ENCODE measurements at regions of chr6 and their contacts with region 1.

Region 1: GRCh38 chr6:2952557-2953095 is 18.7 kb downstream of the SERPINB6 start:
- DNase-seq: peak; percentile 88
- H3K4me3 ChIP-seq: peak overlapping the region in 1 of 2 experiments; percentile 25; a peak in 1 of 4 replicates
- H3K27ac ChIP-seq: peak overlapping the region; percentile 48 to 54
- H3K4me1 ChIP-seq: peaks cover 5 to 9% of the 10 kb centered on the region in 2 experiments; a peak in 2 of 4 replicates
- H3K27me3 ChIP-seq: no peaks in the 10 kb centered on the region
- CTCF ChIP-seq: peak; percentile 100
- EP300 ChIP-seq: no peak
- RAD21 ChIP-seq: peak; percentile 60

Region 2: DNA sequence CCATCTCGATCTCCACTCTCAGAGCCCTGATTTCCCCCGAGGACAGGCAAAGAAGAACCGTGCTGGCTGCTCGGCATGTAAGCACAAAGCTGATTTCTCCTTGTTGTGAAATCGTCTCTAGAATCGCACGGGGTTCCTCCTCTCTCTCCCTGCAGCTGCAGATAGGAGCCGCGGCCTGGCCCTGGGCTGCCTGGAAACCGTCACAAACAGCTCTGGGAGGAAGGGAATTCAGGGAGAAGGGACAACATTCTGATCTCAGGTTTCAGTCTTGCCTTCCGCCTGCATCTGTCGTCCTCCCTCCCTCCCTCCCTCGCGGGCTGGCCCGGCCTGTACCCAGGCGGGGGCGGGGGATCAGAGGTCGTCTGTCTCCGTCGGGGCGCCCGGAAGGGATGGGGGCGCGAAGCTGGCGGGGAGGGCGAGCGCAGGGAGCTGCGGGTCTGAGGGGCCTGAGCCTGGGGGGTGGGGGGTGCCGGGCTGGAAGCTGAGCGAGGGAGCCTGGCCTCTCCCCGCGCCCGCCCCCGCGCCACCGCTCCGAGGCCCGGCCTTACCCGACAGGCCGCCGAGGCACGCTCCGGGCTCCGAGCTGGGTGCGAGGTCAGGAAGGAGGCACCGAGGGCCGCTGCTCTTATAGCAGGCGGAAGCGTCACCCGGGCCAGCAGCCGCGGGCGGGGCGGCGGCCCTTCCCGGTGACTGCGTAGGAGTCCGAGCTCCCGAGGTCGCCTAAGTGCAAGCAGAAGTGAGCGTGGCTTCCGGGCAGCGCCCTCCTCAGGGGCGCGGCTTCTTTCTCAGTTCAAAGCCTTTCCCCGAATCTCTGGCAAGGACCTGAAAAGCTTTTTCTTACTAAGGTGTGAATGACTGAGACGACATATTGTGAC is 111.1 kb before region 1 on chr6 and contains the start of gene SERPINB1:
- CTCF ChIA-PET with region 1: interaction called, 26 read pairs
- POLR2A ChIA-PET with region 1: no interaction called
- DNase-seq: peak; percentile 82
- H3K4me3 ChIP-seq: peak within 1 kb of the TSS; percentile 45 to 47
- H3K27ac ChIP-seq: peak within 1 kb of the TSS; percentile 67 to 87
- H3K4me1 ChIP-seq: peaks cover 25 to 26% of the 10 kb centered on the region in 2 experiments; a peak in 3 of 4 replicates
- H3K27me3 ChIP-seq: no peaks in the 10 kb centered on the region
- CTCF ChIP-seq: no peak
- EP300 ChIP-seq: no peak
- RAD21 ChIP-seq: no peak
- polyA plus RNA-seq, gene SERPINB1: 9.4 and 10.9 TPM in 2 replicates

Region 3: GRCh38 chr6:2940010-2940850 is 12.4 kb before region 1 on chr6:
- CTCF ChIA-PET with region 1: interaction called, 34 read pairs
- POLR2A ChIA-PET with region 1: no interaction called
- DNase-seq: no peak
- H3K4me3 ChIP-seq: no peak overlapping the region
- H3K27ac ChIP-seq: no peak overlapping the region
- H3K4me1 ChIP-seq: no peaks in the 10 kb centered on the region
- H3K27me3 ChIP-seq: no peaks in the 10 kb centered on the region
- CTCF ChIP-seq: no peak
- EP300 ChIP-seq: no peak
- RAD21 ChIP-seq: no peak

Region 4: DNA sequence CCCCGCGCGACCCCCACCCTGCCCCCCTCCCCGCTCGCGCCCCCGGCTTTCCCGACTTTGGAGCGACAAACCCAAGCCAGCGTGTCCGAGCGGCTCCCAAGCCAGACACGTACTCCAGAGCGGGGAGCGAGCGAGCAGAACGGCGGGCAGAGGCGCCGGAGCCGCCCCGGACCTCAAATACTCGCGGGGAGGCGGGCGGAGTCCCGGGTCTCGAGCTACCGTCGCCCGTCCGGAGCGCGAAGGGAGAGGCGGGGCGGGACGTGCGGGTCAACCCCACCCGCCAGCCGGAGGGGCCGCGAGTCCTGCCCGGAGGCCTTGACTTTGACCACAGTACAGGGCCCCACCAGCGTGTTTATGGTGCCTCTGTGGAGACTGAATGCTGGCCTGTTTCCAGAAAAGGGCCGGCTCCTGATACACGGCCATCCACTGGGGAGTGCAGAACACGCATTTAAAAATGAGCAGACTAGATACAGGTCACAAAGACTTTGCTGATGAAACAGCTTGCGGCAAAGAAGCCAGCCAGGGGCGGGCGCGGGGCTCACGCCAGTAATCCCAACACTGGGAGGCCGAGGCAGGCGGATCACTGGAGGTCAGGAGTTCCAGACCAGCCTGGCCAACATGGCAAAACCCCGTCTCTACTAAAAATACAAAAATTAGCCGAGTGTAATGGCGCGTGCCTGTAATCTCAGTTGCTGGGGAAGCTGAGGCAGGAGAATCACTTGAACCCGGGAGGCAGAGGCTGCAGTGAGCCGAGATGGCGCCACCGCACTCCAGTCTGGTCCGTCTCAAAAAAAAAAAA is 19.0 kb after region 1 on chr6 and contains the start of gene SERPINB6:
- CTCF ChIA-PET with region 1: interaction called, 27 read pairs
- POLR2A ChIA-PET with region 1: interaction called, 3 read pairs
- DNase-seq: peak; percentile 84
- H3K4me3 ChIP-seq: peak within 1 kb of the TSS; percentile 67 to 69
- H3K27ac ChIP-seq: peak within 1 kb of the TSS; percentile 56 to 85
- H3K4me1 ChIP-seq: peaks cover 9 to 10% of the 10 kb centered on the region in 2 experiments; a peak in 3 of 4 replicates
- H3K27me3 ChIP-seq: no peaks in the 10 kb centered on the region
- CTCF ChIP-seq: 0 out of 2 replicates have a peak, but pooled peaks have one; percentile 10
- EP300 ChIP-seq: no peak
- RAD21 ChIP-seq: no peak
- polyA plus RNA-seq, gene SERPINB6: 102 and 111 TPM in 2 replicates

Region 5: GRCh38 chr6:2982464-2983117 is 30.0 kb after region 1 on chr6:
- CTCF ChIA-PET with region 1: interaction called, 88 read pairs
- POLR2A ChIA-PET with region 1: no interaction called
- DNase-seq: no peak
- H3K4me3 ChIP-seq: no peak overlapping the region
- H3K27ac ChIP-seq: no peak overlapping the region
- H3K4me1 ChIP-seq: peaks cover 9 to 19% of the 10 kb centered on the region in 2 experiments; a peak in 3 of 4 replicates
- H3K27me3 ChIP-seq: no peaks in the 10 kb centered on the region
- CTCF ChIP-seq: no peak
- EP300 ChIP-seq: no peak
- RAD21 ChIP-seq: no peak